Heart right ventricle (tissue), 16 donors: ENCODE measurements at regions of chr2 and their contacts with region 1.

Region 1: DNA sequence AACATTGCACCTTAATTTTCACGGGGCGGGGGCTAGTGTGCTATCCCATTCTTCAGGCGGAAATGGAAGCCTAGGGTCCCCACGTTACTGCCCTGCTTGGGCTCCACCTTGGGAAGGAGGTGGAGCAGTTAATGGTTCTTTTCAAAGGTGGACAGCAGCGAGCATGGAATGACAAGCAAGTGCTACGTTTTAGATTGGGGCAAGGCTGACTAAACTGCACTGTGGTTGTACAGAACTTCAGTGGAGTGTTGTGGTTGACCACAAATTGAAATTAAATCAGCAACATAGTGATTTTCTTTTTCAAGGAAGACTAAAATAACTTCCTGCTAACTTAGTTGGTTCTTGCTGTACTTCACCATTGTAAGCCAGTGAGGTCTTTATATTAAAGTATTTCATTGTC is 47.0 kb downstream of the CHRNA1 start:
- DNase-seq: no peak
- ATAC-seq: no peak
- H3K4me3 ChIP-seq: no peak overlapping the region
- H3K27ac ChIP-seq: no peak overlapping the region
- H3K4me1 ChIP-seq: peaks cover 0 to 11% (median 0%) of the 10 kb centered on the region in 9 donors
- H3K27me3 ChIP-seq: no peaks in the 10 kb centered on the region
- CTCF ChIP-seq: no peak

Region 2: DNA sequence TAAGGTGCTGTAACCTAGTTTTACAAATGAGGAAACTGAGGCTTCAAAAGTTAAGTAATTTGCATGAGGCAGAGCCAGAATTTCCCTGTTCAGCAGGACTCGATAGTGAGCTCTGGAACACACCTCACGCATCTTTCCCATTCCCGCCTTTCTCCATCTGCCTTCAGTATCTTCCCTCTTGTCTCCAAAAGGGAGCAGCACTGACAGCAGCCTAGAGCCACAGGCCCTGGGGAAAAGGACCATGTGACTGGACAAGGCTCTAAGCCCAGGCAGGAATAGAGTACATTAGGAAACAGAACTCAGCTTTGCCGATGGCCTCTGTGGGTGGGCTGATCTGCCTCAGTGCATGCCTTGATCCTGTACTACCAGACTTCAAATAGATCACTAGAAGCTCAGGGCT is 251.9 kb before region 1 on chr2:
- intact Hi-C with region 1: no loop called
- DNase-seq: peak in 1 of 2 donors; percentile 13
- ATAC-seq: peak in 5 of 8 donors; percentile 38 to 48 (median 46)
- H3K4me3 ChIP-seq: no peak overlapping the region
- H3K27ac ChIP-seq: no peak overlapping the region
- H3K4me1 ChIP-seq: no peaks in the 10 kb centered on the region
- H3K27me3 ChIP-seq: no peaks in the 10 kb centered on the region
- CTCF ChIP-seq: peak in 3 of 9 donors; percentile 11 to 42 (median 18)

Region 3: DNA sequence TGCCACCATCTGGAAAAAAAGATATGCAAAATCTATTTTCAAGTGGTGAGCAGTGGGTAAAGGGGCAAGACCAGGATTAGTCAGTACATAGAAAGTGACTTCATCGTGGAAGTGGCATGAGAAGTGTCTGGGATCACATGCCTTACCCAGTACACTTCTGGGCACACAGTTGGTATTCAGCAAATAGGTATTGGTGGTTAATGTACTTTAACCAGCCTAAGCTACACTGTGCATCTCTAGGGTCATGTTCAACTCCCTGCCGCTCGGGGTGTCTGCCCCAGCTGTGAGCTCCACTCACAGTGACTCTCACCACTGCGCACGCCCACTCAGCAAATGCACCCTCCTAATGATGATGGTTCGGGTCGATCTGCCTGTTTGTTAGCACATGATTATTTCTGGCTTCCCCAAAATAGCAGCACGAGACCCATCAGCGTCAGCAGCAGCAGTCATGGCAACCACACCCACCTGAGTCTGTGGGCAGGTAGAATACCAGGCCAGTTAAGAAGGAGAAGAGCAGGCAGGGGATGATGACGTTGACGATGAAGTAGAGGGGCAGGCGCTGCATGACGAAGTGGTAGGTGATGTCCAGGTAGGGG is 35.9 kb after region 1 on chr2:
- intact Hi-C with region 1: loop called in 1 of 10 experiments (anchors 1 kb)
- DNase-seq: no peak
- ATAC-seq: peak in 4 of 8 donors; percentile 29 to 62 (median 46)
- H3K4me3 ChIP-seq: no peak overlapping the region
- H3K27ac ChIP-seq: no peak overlapping the region
- H3K4me1 ChIP-seq: peaks cover 0 to 15% (median 0%) of the 10 kb centered on the region in 9 donors
- H3K27me3 ChIP-seq: peaks cover 0 to 6% (median 0%) of the 10 kb centered on the region in 7 donors
- CTCF ChIP-seq: no peak